ENCODE measurements at regions of chr9 and their contacts with region 1.

Region 1: GRCh38 chr9:136245219-136246150 is at the start of gene QSOX2:
- DNase-seq: peak; percentile 95
- H3K4me3 Mint-ChIP-seq: peak within 1 kb of the TSS; percentile 92
- H3K27ac Mint-ChIP-seq: peak within 1 kb of the TSS; percentile 93
- H3K4me1 Mint-ChIP-seq: peaks cover 31% of the 10 kb centered on the region
- H3K27me3 Mint-ChIP-seq: peaks cover 4% of the 10 kb centered on the region
- total RNA-seq, gene QSOX2: 26.4 and 28.0 TPM in 2 replicates

Region 2: GRCh38 chr9:135961277-135961705 is 284.2 kb before region 1 on chr9 and contains the start of gene UBAC1:
- intact Hi-C with region 1: loop called (anchors 10 kb)
- DNase-seq: peak; percentile 99
- H3K4me3 Mint-ChIP-seq: peak within 1 kb of the TSS; percentile 93
- H3K27ac Mint-ChIP-seq: peak within 1 kb of the TSS; percentile 85
- H3K4me1 Mint-ChIP-seq: peaks cover 32% of the 10 kb centered on the region
- H3K27me3 Mint-ChIP-seq: peaks cover 5% of the 10 kb centered on the region
- total RNA-seq, gene UBAC1: 43.2 and 47.7 TPM in 2 replicates

Region 3: GRCh38 chr9:136231478-136232297 is 13.8 kb before region 1 on chr9:
- intact Hi-C with region 1: loop called (anchors 1 kb)
- DNase-seq: peak; percentile 86
- H3K4me3 Mint-ChIP-seq: peak overlapping the region; percentile 70
- H3K27ac Mint-ChIP-seq: peak overlapping the region; percentile 89
- H3K4me1 Mint-ChIP-seq: peaks cover 34% of the 10 kb centered on the region
- H3K27me3 Mint-ChIP-seq: no peaks in the 10 kb centered on the region

Region 4: DNA sequence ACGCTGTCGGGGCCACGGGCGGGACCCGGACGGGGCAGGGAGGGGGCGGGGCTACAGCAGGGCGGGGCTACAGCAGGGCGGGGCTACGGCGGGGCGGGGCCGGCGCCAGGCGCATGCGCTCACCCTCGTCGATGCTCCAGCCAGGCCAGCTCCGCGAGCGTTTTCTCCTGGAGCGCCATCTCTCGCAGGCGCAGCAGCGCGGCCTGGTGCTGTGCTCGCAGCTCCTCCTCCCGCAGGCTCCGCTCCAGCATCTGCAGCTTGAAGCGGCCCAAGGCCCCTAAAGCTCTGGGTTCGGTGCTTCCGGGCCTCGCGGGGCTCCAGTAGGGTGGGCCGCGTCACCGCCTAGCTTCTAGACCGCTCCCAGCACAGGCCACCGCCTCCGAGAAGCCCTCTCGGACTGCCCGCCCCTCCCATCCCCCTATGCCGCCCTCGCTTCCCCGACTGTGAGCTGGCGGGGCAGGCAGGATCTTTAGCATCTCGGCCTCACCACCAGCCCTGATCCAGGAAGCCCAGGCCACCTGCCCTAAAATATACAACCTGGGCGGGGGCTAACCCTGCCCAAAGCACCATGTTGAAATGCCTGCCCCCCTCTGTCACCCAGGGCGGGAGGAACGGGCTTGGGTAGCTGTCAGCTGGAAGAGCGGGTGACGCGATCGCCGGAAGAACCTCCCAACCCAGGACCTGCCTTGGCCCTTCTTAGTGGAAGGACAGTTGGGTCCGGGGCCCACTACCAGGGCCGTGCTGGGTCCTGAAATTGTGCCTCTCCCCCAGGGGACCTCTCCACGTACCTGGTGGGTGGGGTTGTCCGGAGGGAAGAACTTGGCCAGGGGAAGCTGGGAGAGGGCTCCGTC is 22.0 kb after region 1 on chr9:
- intact Hi-C with region 1: loop called (anchors 1 kb)
- DNase-seq: peak; percentile 94
- H3K4me3 Mint-ChIP-seq: peak overlapping the region; percentile 70
- H3K27ac Mint-ChIP-seq: peak overlapping the region; percentile 80
- H3K4me1 Mint-ChIP-seq: peaks cover 4% of the 10 kb centered on the region
- H3K27me3 Mint-ChIP-seq: peaks cover 12% of the 10 kb centered on the region

Region 5: DNA sequence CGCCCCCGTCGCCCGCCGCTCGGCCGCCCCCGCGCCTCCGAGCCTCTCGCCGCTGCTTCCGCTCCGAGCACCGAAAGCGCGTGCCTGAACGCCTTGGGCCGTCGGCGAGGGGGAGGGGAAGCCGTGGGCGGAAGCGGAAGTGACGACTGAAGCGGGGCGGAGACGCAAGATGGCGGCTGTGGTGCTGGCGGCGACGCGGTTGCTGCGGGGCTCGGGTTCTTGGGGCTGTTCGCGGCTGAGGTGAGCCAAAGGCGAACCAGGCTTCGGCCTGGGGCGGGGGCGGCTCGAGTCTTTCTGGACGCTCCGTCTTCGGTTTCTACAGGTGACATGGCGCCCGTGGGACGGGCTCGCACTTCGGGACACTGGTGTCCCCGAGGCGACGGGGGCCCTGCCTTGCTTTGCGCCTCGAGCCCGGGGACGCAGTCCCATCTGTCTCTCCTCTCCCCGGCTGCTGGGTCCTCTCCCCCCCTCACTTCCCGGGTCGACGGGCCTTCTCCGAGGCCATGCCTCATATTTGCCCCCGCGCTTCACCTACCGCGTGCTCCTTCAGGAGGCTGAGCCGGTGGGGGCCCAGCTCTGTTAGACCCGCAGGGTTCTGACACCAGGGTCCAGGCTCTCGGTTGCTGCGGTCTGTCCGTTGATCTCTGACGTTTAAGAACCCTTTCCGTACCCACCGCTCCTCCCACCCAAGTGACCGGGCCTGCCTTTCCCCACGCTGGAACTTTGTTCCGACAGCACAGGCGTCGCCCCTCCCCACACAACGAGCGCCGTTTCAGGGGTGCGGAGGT is 165.2 kb after region 1 on chr9 and contains the starts of genes ENTR1 and PMPCA:
- intact Hi-C with region 1: loop called (anchors 5 kb)
- DNase-seq: peak; percentile 99
- H3K4me3 Mint-ChIP-seq: peak within 1 kb of the TSS; percentile 94
- H3K27ac Mint-ChIP-seq: peak within 1 kb of the TSS; percentile 95
- H3K4me1 Mint-ChIP-seq: peaks cover 40% of the 10 kb centered on the region
- H3K27me3 Mint-ChIP-seq: no peaks in the 10 kb centered on the region
- total RNA-seq, gene ENTR1: 56.4 and 60.0 TPM in 2 replicates
- total RNA-seq, gene PMPCA: 114 and 124 TPM in 2 replicates

Region 6: DNA sequence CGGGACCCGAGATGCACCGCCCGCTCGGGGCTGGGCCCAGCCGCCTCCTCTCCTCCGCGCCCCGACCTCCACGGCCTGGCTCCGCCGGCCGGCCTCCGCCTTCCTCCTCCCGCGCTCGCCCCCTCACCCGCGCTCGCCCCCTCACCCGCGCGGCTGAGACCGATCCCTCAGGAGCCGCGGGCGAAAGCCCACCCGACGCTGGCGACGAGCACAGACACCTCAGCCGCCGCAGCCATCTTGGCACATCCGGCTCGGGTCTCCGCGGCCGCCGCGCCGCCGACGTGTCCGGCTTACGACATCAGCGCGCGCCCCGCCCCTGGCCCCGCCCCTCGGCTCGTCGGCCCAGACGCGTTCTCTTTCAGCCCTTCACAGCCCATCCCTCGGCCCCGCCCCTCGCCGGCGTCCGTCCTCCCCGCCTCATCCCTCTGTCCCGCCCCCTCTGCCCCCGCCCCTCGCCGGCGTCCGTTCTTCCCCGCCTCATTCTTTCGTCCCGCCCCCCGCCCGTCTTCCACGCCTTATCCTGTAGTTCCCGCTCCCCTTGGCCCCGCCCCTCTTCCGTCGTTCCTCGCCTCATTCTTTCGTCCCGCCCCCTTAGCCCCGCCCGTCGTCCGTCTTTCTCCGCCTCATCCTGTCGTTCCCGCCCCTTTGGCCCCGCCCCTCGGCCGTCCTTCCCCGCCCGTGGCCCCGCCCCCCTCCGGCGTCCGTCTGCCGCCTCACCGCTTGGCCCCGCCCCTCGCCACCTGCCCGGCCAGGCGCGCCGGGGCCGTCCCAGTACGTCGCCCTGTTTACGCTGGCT is 237.5 kb after region 1 on chr9 and contains the start of gene SEC16A:
- intact Hi-C with region 1: loop called (anchors 2 kb)
- DNase-seq: peak; percentile 99
- H3K4me3 Mint-ChIP-seq: peak within 1 kb of the TSS; percentile 94
- H3K27ac Mint-ChIP-seq: peak within 1 kb of the TSS; percentile 97
- H3K4me1 Mint-ChIP-seq: peaks cover 20% of the 10 kb centered on the region
- H3K27me3 Mint-ChIP-seq: peaks cover 2% of the 10 kb centered on the region
- total RNA-seq, gene SEC16A: 79.2 and 81.2 TPM in 2 replicates